Right ventricle myocardium inferior (tissue), 1 donor: ENCODE measurements at regions of chr11 and their contacts with region 1.

Region 1: GRCh38 chr11:9015677-9016076 is 11.9 kb upstream of the NRIP3 start:
- DNase-seq: no peak
- ATAC-seq: peak; percentile 54

Region 2: GRCh38 chr11:9137293-9138132 is 121.8 kb after region 1 on chr11:
- intact Hi-C with region 1: loop called (anchors 1 kb)
- DNase-seq: peak; percentile 80
- ATAC-seq: peak; percentile 88